H1 (cell line): ENCODE measurements at regions of chr11 and their contacts with region 1.

Region 1: GRCh38 chr11:47593934-47594855 is at the start of gene C1QTNF4:
- DNase-seq: peak in 1 of 2 experiments; percentile 77
- H3K4me3 ChIP-seq: peak within 1 kb of the TSS; percentile 49 to 94 (median 63)
- H3K27ac ChIP-seq: no peak within 1 kb of the TSS
- H3K4me1 ChIP-seq: peaks cover 3 to 8% (median 4%) of the 10 kb centered on the region in 4 experiments; a peak in 6 of 7 replicates
- H3K27me3 ChIP-seq: peaks cover 0 to 32% (median 26%) of the 10 kb centered on the region in 4 experiments; a peak in 6 of 7 replicates
- CTCF ChIP-seq: no peak
- EP300 ChIP-seq: no peak
- POLR2A ChIP-seq: no peak
- RAD21 ChIP-seq: no peak
- total RNA-seq, gene C1QTNF4: 3.5 and 6.0 TPM in 2 replicates

Region 2: DNA sequence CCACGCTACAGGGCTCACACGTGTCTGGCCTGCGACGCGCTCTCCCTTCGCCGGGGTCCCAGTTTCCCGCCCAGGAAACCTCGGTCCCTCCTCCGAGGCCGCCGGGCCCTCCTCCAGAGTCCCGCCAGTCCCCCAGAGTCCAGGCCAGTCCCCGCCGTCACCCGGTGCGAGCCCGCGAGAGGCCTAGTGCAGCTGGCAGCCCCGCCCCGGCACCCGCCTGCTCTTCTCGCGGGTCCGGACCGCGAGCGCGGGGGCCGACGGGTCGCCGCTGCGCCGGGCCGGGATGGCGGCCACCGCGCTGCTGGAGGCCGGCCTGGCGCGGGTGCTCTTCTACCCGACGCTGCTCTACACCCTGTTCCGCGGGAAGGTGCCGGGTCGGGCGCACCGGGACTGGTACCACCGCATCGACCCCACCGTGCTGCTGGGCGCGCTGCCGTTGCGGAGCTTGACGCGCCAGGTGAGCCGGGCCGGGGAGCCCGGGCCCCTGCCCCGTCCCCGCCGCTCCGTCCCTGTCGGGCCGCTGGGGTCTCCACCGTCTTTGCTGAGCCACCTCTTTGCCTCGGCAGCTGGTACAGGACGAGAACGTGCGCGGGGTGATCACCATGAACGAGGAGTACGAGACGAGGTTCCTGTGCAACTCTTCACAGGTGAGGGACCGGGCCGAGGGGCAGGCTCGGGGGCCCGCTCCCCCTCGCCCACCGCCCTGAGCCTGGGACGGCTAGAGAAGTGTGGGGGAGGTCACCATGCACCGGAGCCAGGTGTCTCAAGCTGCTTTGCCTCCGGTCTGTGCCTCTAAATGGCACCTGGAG is 28.7 kb before region 1 on chr11 and contains the start of gene PTPMT1:
- CTCF ChIA-PET with region 1: interaction called, 6 read pairs
- POLR2A ChIA-PET with region 1: interaction called, 12 read pairs
- DNase-seq: peak in 1 of 2 experiments; percentile 86
- H3K4me3 ChIP-seq: peak within 1 kb of the TSS; percentile 44 to 96 (median 95)
- H3K27ac ChIP-seq: peak within 1 kb of the TSS; percentile 53
- H3K4me1 ChIP-seq: peaks cover 0 to 3% (median 1%) of the 10 kb centered on the region in 4 experiments; a peak in 1 of 7 replicates
- H3K27me3 ChIP-seq: no peaks in the 10 kb centered on the region
- CTCF ChIP-seq: 0 out of 4 replicates have a peak, but pooled peaks of 1 of the 3 experiments have one; percentile 1
- EP300 ChIP-seq: peak in 1 of 2 experiments; percentile 9; a peak in 1 of 3 replicates
- POLR2A ChIP-seq: peak; percentile 48 to 82
- RAD21 ChIP-seq: no peak
- total RNA-seq, gene PTPMT1: 44.8 and 48.4 TPM in 2 replicates

Region 3: GRCh38 chr11:47578524-47579460 is 15.4 kb before region 1 on chr11 and contains the starts of genes KBTBD4 and NDUFS3:
- CTCF ChIA-PET with region 1: interaction called, 7 read pairs
- POLR2A ChIA-PET with region 1: interaction called, 42 read pairs
- DNase-seq: peak; percentile 62 to 96
- H3K4me3 ChIP-seq: peak within 1 kb of the TSS; percentile 83 to 93 (median 90)
- H3K27ac ChIP-seq: peak within 1 kb of the TSS; percentile 97
- H3K4me1 ChIP-seq: peaks cover 0 to 5% (median 2%) of the 10 kb centered on the region in 4 experiments; a peak in 2 of 7 replicates
- H3K27me3 ChIP-seq: no peaks in the 10 kb centered on the region
- CTCF ChIP-seq: no peak
- EP300 ChIP-seq: peak; percentile 35 to 85
- POLR2A ChIP-seq: peak; percentile 38 to 91
- RAD21 ChIP-seq: peak in 1 of 2 experiments; percentile 8; a peak in 1 of 4 replicates
- total RNA-seq, gene KBTBD4: 12.0 and 14.0 TPM in 2 replicates
- total RNA-seq, gene NDUFS3: 135 and 136 TPM in 2 replicates

Region 4: GRCh38 chr11:47616726-47617416 is 22.7 kb after region 1 on chr11:
- CTCF ChIA-PET with region 1: interaction called, 9 read pairs
- POLR2A ChIA-PET with region 1: interaction called, 10 read pairs
- DNase-seq: no peak
- H3K4me3 ChIP-seq: no peak overlapping the region
- H3K27ac ChIP-seq: no peak overlapping the region
- H3K4me1 ChIP-seq: no peaks in the 10 kb centered on the region
- H3K27me3 ChIP-seq: no peaks in the 10 kb centered on the region
- CTCF ChIP-seq: peak; percentile 14 to 83 (median 68)
- EP300 ChIP-seq: no peak
- POLR2A ChIP-seq: no peak
- RAD21 ChIP-seq: peak; percentile 88 to 90

Region 5: DNA sequence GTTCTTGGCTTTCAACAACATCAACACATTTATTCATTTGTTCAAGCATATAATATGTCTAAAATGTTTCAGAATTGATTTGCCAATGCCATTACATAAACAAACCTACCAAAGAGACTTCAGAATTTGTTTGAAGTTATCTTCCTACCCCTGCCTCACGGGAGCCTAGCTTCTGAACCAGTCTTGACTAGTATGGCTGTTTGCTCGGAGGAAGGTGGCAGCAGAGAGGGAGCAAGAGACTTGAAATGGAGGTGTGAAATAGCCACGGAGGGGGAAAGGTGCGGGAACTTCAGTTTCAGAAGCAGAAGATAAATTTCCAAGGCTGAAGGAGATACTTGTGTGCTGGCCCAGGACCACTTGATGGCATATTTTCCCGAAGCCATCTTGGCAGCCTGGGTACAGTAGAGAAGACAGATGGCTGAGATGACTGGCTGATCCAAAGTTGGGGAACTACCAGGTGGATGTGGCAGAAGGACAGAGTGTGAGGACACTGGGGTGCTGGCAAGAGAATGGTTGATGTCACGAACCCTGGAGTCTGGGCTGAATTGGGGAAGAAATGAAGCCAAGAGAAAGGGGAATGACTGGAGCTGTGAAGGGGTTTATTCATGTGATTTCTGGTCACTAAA is 62.2 kb after region 1 on chr11:
- CTCF ChIA-PET with region 1: no interaction called
- POLR2A ChIA-PET with region 1: no interaction called
- DNase-seq: no peak
- H3K4me3 ChIP-seq: no peak overlapping the region
- H3K27ac ChIP-seq: no peak overlapping the region
- H3K4me1 ChIP-seq: no peaks in the 10 kb centered on the region
- H3K27me3 ChIP-seq: no peaks in the 10 kb centered on the region
- CTCF ChIP-seq: no peak
- EP300 ChIP-seq: no peak
- POLR2A ChIP-seq: no peak
- RAD21 ChIP-seq: no peak; a peak in 1 of 4 replicates